IMR-90 (cell line): ENCODE measurements at regions of chr17 and their contacts with region 1.

Region 1: DNA sequence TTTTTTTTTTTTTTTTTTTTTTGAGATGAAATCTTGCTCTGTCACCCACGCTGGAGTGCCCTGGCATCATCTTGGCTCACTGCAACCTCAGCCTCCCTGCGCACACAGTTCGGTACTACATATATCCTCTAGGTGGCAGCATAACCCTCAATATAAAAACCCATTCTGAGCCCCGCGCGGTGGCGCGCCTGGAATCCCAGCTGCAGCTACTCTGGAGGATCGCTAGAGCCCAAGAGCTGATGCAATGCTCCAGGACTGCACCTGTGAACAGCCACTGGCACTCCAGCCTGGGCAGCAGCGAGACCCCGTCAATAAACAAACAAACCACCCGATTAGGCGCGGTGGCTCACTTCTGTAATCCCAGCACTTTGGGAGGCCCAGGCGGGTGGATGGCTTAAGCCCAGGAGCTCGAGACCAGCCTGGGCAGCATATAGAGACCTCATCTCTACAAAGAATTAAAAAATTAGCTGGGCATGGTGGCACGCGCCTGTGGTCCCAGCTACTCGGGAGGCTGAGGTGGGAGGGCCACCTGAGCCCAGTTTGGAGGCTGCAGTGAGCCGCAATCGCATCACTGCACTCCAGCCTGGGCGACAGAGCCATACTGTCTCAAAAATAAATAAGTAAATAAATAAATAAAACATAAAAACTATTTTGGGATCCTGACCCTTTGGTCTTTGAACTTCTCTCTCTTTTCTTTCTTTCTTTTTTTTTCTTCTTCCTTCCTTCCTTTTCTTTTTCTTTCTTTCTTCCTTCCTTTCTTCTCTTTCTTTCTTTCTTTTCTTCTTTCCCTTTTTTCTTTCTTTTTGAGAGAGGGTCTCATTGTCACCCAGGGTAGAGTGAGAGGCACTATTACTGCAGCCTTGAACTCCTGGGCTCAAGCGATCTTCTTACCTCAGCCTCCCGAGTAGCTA is 15.4 kb upstream of the AKAP10 start:
- DNase-seq: peak; percentile 84
- ATAC-seq: peak; percentile 99
- H3K4me3 ChIP-seq: no peak overlapping the region
- H3K27ac ChIP-seq: no peak overlapping the region
- H3K4me1 ChIP-seq: no peaks in the 10 kb centered on the region
- H3K27me3 ChIP-seq: no peaks in the 10 kb centered on the region
- CTCF ChIP-seq: peak; percentile 90
- POLR2A ChIP-seq: no peak
- RAD21 ChIP-seq: peak; percentile 83

Region 2: GRCh38 chr17:20095336-20096080 is 102.5 kb after region 1 on chr17:
- CTCF ChIA-PET with region 1: no interaction called
- POLR2A ChIA-PET with region 1: no interaction called
- dilution Hi-C with region 1: no loop called
- in situ Hi-C with region 1: no loop called
- intact Hi-C with region 1: loop called (anchors 5 kb)
- DNase-seq: peak; percentile 13
- ATAC-seq: peak; percentile 69
- H3K4me3 ChIP-seq: no peak overlapping the region
- H3K27ac ChIP-seq: no peak overlapping the region
- H3K4me1 ChIP-seq: no peaks in the 10 kb centered on the region
- H3K27me3 ChIP-seq: peaks cover 38% of the 10 kb centered on the region
- CTCF ChIP-seq: 0 out of 2 replicates have a peak, but pooled peaks have one; percentile 19
- POLR2A ChIP-seq: no peak
- RAD21 ChIP-seq: no peak

Region 3: DNA sequence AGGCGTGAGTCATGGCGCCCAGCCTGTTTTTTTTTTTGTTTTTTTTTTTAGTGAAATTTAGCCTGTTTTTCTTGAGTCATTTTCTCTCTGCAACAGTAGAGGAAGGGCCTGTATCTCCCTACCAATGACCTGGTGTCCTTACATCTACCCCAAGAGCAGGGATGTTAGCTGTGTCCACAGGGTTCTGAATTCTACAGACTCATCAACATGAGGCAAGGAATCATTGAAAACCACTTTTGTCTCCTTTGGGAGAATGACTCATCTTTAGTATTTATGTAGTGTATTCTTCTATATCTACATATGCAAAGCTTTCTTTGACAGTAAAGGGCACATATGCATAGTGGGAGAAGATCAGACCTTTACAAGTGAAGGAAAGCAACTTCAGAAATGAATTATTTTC is 121.4 kb after region 1 on chr17:
- CTCF ChIA-PET with region 1: interaction called, 12 read pairs
- POLR2A ChIA-PET with region 1: no interaction called
- dilution Hi-C with region 1: no loop called
- in situ Hi-C with region 1: loop called (anchors 5 kb)
- intact Hi-C with region 1: loop called (anchors 1 kb)
- DNase-seq: peak; percentile 29
- ATAC-seq: no peak
- H3K4me3 ChIP-seq: no peak overlapping the region
- H3K27ac ChIP-seq: no peak overlapping the region
- H3K4me1 ChIP-seq: no peaks in the 10 kb centered on the region
- H3K27me3 ChIP-seq: peaks cover 19% of the 10 kb centered on the region
- CTCF ChIP-seq: no peak
- POLR2A ChIP-seq: no peak
- RAD21 ChIP-seq: no peak

Region 4: DNA sequence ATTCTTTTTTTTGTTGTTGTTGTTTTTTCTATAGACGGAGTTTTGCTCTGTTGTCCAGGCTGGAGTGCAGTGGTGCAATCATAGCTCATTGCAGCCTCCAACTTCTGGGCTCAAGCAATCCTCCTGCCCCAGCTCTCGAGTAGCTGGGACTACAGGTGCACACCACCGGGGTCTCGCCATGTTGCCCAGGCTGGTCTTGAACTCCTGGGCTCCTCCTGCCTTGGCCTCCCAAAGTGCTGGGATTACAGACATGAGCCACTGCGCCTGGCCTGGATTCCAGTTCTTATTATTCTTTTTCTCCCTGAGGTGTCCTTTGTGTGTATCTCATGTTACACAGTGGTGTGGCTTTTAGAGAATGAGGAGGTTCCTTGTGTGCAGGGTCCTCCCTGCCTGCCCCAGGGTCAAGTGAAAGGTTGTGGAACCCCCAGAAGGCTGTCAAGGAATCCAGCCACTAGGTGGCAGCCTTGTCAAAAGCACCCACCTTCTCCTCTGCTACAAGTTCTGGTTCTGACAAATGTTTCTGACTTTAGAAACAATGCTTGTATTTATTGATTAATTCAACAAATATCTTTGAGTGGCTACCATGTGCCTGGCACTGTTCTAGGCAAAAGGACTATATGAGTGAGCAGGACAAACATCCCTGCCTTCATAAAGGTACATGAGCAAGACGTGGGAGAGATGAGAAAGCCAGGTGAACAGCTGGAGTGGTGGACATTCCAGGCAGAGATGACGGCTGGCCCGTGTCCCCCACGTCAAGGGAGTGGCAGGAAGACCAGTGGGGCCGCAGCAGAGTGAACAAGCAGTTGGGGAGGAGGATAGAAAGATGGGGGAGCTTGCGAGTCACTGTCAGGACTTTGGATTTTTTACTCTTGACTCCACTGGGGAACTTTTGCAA is 128.5 kb after region 1 on chr17:
- CTCF ChIA-PET with region 1: interaction called, 12 read pairs
- POLR2A ChIA-PET with region 1: no interaction called
- dilution Hi-C with region 1: no loop called
- in situ Hi-C with region 1: no loop called
- intact Hi-C with region 1: loop called (anchors 1 kb)
- DNase-seq: peak; percentile 62
- ATAC-seq: peak; percentile 79
- H3K4me3 ChIP-seq: no peak overlapping the region
- H3K27ac ChIP-seq: no peak overlapping the region
- H3K4me1 ChIP-seq: peaks cover 5% of the 10 kb centered on the region
- H3K27me3 ChIP-seq: no peaks in the 10 kb centered on the region
- CTCF ChIP-seq: peak; percentile 92
- POLR2A ChIP-seq: 0 out of 2 replicates have a peak, but pooled peaks have one; percentile 44
- RAD21 ChIP-seq: peak; percentile 94

Region 5: GRCh38 chr17:20315821-20316220 is 322.8 kb after region 1 on chr17:
- CTCF ChIA-PET with region 1: no interaction called
- POLR2A ChIA-PET with region 1: no interaction called
- dilution Hi-C with region 1: no loop called
- in situ Hi-C with region 1: loop called (anchors 10 kb)
- intact Hi-C with region 1: loop called (anchors 5 kb)
- DNase-seq: peak; percentile 4
- ATAC-seq: no peak
- H3K4me3 ChIP-seq: no peak overlapping the region
- H3K27ac ChIP-seq: no peak overlapping the region
- H3K4me1 ChIP-seq: no peaks in the 10 kb centered on the region
- H3K27me3 ChIP-seq: no peaks in the 10 kb centered on the region
- CTCF ChIP-seq: no peak
- POLR2A ChIP-seq: no peak
- RAD21 ChIP-seq: no peak

Region 6: DNA sequence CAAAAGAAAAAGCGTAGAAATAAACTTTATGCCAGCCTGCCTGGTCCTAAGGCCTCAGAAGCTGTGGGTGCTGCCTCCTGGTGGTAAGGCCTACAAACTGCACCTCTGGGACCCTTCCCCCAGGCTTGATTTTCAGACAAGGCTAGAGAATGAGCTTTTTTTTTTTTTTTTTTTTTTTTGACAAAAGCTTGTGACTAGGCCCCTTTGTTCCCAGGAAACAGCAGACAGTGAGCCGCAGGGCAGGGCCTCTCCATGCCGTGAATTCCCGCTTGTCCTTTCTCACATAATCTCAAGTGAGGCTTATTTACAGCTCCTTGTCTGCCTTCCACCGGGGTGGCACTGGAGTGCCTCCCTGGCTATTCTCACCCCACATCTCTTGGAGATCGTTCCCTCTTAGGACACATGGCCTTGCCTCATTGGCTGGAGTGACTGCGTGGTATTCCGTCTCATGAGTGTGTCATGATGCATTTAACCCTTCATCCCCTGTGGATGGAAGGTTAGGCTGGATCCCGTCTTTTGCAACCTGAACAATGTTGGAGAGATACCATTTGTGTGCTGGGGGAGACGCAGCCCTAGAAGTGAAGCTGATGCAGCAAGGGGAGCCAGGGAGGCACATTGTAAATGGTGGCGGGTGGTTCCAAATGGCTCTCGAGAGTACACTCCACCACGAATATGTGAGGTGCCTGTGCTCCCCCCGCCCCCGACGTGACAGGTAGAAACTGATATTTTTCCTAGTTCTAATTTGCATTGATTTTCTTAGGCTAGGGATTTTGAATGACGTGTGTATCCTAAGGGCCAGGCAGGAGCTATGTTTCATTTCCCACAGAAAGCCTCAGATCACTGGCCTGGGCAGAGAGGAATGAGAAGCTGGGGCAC is 1000.2 kb after region 1 on chr17:
- CTCF ChIA-PET with region 1: no interaction called
- POLR2A ChIA-PET with region 1: no interaction called
- dilution Hi-C with region 1: no loop called
- in situ Hi-C with region 1: no loop called
- intact Hi-C with region 1: loop called (anchors 5 kb)
- DNase-seq: peak; percentile 71
- ATAC-seq: peak; percentile 82
- H3K4me3 ChIP-seq: no peak overlapping the region
- H3K27ac ChIP-seq: no peak overlapping the region
- H3K4me1 ChIP-seq: peaks cover 2% of the 10 kb centered on the region; the same call in 1 of the 2 replicates
- H3K27me3 ChIP-seq: peaks cover 3% of the 10 kb centered on the region; the same call in 1 of the 2 replicates
- CTCF ChIP-seq: peak; percentile 93
- POLR2A ChIP-seq: 0 out of 2 replicates have a peak, but pooled peaks have one; percentile 19
- RAD21 ChIP-seq: peak; percentile 87